ENCODE measurements at regions of chr11 and their contacts with region 1.

Region 1: GRCh38 chr11:118610804-118611795 is 3.7 kb downstream of the PHLDB1 start:
- DNase-seq: peak; percentile 72 to 89 (median 82)
- ATAC-seq: peak; percentile 71
- H3K4me3 ChIP-seq: peak overlapping the region; percentile 61
- H3K4me3 Mint-ChIP-seq: peak overlapping the region; percentile 35 to 88 (median 78)
- H3K27ac ChIP-seq: peak overlapping the region; percentile 57
- H3K27ac Mint-ChIP-seq: peak overlapping the region in 7 of 9 donors; percentile 33 to 82 (median 70)
- H3K4me1 ChIP-seq: peaks cover 18 to 23% of the 10 kb centered on the region in 2 donors
- H3K4me1 Mint-ChIP-seq: peaks cover 16 to 26% (median 23%) of the 10 kb centered on the region in 7 donors
- H3K27me3 ChIP-seq: no peaks in the 10 kb centered on the region
- H3K27me3 Mint-ChIP-seq: peaks cover 0 to 54% (median 0%) of the 10 kb centered on the region in 5 donors

Region 2: DNA sequence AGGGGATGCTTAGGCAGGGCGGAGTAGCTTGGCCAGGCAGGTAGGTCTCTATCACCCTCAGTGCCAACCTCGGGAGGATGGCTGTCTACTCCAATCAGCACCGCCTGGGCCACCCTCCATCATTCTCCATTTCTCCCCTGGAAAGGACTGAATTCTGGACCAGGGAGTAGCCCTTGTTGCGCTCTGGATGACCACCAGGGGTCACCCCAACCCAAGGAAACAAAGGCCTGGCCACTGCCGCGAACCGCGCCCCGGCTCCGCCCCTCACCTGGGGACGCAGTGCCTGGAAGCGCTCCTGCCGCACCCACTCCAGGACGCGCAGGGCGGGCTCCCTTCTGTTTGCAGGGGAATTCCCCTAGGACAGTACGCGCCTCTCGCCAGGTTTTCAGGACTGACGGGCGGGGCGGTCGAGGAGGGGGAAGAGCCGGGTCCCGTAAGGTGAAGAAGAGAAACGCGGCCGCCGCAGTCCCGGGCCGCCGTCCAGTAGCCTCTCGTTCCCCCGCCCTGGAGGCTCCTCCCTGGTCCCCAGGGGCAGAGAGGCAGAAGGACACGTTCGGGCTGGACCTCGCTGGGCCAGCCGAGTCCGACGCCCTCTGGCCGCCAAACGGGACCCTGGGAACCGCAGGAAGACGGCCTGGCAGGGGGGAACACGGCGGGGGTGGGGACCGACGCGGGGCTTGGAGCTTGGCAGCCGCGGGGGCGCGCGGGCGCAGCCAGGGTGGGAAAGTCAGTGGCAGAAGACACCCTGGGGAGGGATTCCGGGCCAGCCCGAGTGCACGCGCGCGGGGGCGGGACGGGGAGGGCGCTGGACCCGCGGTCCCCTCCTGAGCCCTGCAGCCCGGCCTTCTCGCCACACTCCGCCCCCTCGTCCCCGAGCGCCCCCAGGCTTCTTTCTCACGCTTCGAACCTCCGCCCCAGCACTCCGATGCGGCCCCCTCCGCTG is 465.5 kb before region 1 on chr11:
- CTCF ChIA-PET with region 1: interaction called, 6 read pairs
- POLR2A ChIA-PET with region 1: no interaction called
- intact Hi-C with region 1: loop called (anchors 1 kb)
- DNase-seq: peak; percentile 76 to 93 (median 81)
- ATAC-seq: peak; percentile 95
- H3K4me3 ChIP-seq: peak overlapping the region; percentile 66
- H3K4me3 Mint-ChIP-seq: peak overlapping the region; percentile 43 to 88 (median 83)
- H3K27ac ChIP-seq: no peak overlapping the region
- H3K27ac Mint-ChIP-seq: peak overlapping the region in 1 of 9 donors; percentile 35
- H3K4me1 ChIP-seq: no peaks in the 10 kb centered on the region
- H3K4me1 Mint-ChIP-seq: peaks cover 0 to 20% (median 5%) of the 10 kb centered on the region in 7 donors
- H3K27me3 ChIP-seq: peaks cover 0 to 5% of the 10 kb centered on the region in 2 donors
- H3K27me3 Mint-ChIP-seq: peaks cover 45 to 78% (median 56%) of the 10 kb centered on the region in 5 donors

Region 3: DNA sequence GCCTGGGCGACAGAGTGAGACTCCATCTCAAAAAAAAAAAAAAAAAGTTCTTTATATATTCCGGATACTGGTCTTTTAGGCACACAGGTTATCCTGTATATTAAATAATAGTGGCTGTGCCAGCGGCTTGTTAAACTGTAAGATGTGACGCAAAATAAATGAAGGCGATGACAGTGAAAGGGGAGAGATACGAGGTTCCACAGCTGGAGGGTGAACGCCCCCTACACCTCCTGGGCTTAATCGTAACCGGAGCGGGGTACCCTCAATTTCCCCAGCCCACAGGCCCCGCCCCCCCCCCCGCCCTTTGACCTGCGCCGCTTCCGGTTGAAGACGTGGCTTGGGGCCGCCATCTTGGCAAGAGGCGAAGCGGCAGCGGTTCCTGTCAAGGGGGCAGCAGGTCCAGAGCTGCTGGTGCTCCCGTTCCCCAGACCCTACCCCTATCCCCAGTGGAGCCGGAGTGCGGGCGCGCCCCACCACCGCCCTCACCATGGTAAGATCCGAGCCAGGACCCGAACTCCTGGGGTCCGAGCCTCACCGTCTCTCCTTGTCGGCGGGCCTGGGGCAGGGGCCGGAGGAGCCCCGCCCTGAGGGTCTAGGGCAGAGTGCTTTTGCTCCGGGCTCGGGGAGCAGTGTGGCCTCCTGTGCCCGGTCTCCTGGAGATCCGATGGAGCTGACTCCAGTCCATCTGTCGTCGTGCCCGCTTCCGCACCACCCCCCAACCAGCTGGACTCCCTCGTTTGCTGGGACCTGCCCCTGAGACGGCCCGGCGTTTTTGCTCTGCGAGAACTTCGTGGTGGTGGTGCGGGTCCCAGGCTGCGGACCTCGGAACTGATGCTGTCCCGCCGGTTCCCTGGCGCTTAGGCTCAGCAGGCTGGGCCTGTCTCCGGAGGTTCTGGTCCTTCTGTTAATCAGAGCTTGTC is 38.8 kb before region 1 on chr11 and contains the start of gene ARCN1:
- CTCF ChIA-PET with region 1: interaction called, 3 read pairs
- POLR2A ChIA-PET with region 1: interaction called, 27 read pairs
- intact Hi-C with region 1: loop called in 1 of 2 experiments (anchors 1 kb)
- DNase-seq: peak; percentile 58 to 82 (median 79)
- ATAC-seq: peak; percentile 94
- H3K4me3 ChIP-seq: peak within 1 kb of the TSS; percentile 98
- H3K4me3 Mint-ChIP-seq: peak within 1 kb of the TSS; percentile 83 to 99 (median 96)
- H3K27ac ChIP-seq: peak within 1 kb of the TSS; percentile 100
- H3K27ac Mint-ChIP-seq: peak within 1 kb of the TSS; percentile 92 to 98 (median 98)
- H3K4me1 ChIP-seq: peaks cover 26 to 36% of the 10 kb centered on the region in 2 donors
- H3K4me1 Mint-ChIP-seq: peaks cover 35 to 58% (median 50%) of the 10 kb centered on the region in 7 donors
- H3K27me3 ChIP-seq: no peaks in the 10 kb centered on the region
- H3K27me3 Mint-ChIP-seq: no peaks in the 10 kb centered on the region
- total RNA-seq, gene ARCN1: 71.2 to 134 (median 115) TPM

Region 4: DNA sequence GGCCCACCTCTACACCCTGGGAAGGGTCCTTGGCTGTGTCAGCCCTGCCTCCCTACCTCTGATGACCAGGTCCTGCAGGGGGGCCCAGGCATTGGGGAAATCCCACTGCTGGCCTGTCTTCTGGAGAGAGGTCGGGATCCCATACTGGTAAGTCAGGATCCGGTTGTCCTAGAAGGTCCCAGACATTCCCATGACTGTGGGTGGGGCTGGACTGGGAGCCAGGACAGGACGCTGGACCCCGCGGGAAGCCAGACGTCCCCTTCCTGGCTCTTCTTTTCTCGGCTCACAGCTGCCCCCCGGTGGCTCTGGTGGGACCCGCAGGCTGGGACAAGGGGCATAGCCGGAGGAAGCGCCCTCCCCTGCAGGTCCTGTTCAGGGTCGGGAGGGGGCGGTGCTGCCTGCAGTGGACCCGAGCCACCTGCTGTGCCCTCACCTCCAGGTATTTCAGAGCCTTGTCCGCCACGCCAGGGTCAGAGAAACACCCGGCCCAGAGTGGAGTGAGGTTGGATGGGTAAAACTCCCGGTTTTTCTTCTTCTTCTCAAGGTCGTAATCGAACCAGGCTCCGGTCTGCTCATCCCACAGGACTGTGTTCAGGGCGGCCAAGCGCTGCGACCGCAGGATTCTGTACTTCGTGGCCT is 48.3 kb after region 1 on chr11:
- CTCF ChIA-PET with region 1: no interaction called
- POLR2A ChIA-PET with region 1: no interaction called
- intact Hi-C with region 1: loop called (anchors 2 to 5 kb)
- DNase-seq: peak; percentile 75 to 88 (median 84)
- ATAC-seq: peak; percentile 99
- H3K4me3 ChIP-seq: no peak overlapping the region
- H3K4me3 Mint-ChIP-seq: peak overlapping the region in 2 of 10 donors; percentile 56 to 64
- H3K27ac ChIP-seq: no peak overlapping the region
- H3K27ac Mint-ChIP-seq: peak overlapping the region in 1 of 9 donors; percentile 1
- H3K4me1 ChIP-seq: peaks cover 0 to 7% of the 10 kb centered on the region in 2 donors
- H3K4me1 Mint-ChIP-seq: peaks cover 0 to 12% (median 6%) of the 10 kb centered on the region in 7 donors
- H3K27me3 ChIP-seq: no peaks in the 10 kb centered on the region
- H3K27me3 Mint-ChIP-seq: no peaks in the 10 kb centered on the region

Region 5: GRCh38 chr11:118956094-118956846 is 345.2 kb after region 1 on chr11 and contains the start of gene UPK2:
- CTCF ChIA-PET with region 1: no interaction called
- POLR2A ChIA-PET with region 1: no interaction called
- intact Hi-C with region 1: loop called in 1 of 2 experiments (anchors 2 kb)
- DNase-seq: peak; percentile 74 to 91 (median 83)
- ATAC-seq: peak; percentile 99
- H3K4me3 ChIP-seq: no peak within 1 kb of the TSS
- H3K4me3 Mint-ChIP-seq: peak within 1 kb of the TSS in 1 of 10 donors; percentile 49
- H3K27ac ChIP-seq: no peak within 1 kb of the TSS
- H3K27ac Mint-ChIP-seq: peak within 1 kb of the TSS in 8 of 9 donors; percentile 2 to 77 (median 54)
- H3K4me1 ChIP-seq: no peaks in the 10 kb centered on the region
- H3K4me1 Mint-ChIP-seq: peaks cover 0 to 11% (median 5%) of the 10 kb centered on the region in 7 donors
- H3K27me3 ChIP-seq: no peaks in the 10 kb centered on the region
- H3K27me3 Mint-ChIP-seq: peaks cover 0 to 31% (median 0%) of the 10 kb centered on the region in 5 donors
- total RNA-seq, gene UPK2: 0.24 TPM in 1 of 5 experiments, not detected in the others